Heart left ventricle (tissue), 16 donors: ENCODE measurements at regions of chr15 and their contacts with region 1.

Region 1: GRCh38 chr15:56886932-56887781 is 31.3 kb upstream of the TCF12 start:
- DNase-seq: peak; percentile 96 to 97 (median 97)
- ATAC-seq: peak; percentile 98 to 99 (median 98)
- H3K4me3 ChIP-seq: peak overlapping the region; percentile 47 to 86 (median 71)
- H3K27ac ChIP-seq: peak overlapping the region; percentile 95 to 99 (median 98)
- H3K4me1 ChIP-seq: peaks cover 0 to 32% (median 17%) of the 10 kb centered on the region in 12 donors
- H3K27me3 ChIP-seq: no peaks in the 10 kb centered on the region
- CTCF ChIP-seq: peak in 3 of 12 donors; percentile 12 to 33 (median 28)
- POLR2A ChIP-seq: peak in 1 of 2 donors; percentile 75

Region 2: GRCh38 chr15:56732921-56733797 is 154.0 kb before region 1 on chr15 and contains the start of gene ZNF280D:
- intact Hi-C with region 1: loop called in 3 of 10 experiments (anchors 2 to 10 kb)
- DNase-seq: peak; percentile 93 to 96 (median 94)
- ATAC-seq: peak; percentile 85 to 97 (median 96)
- H3K4me3 ChIP-seq: peak within 1 kb of the TSS; percentile 61 to 88 (median 76)
- H3K27ac ChIP-seq: peak within 1 kb of the TSS; percentile 96 to 99 (median 98)
- H3K4me1 ChIP-seq: peaks cover 0 to 48% (median 39%) of the 10 kb centered on the region in 12 donors
- H3K27me3 ChIP-seq: no peaks in the 10 kb centered on the region
- CTCF ChIP-seq: peak in 1 of 12 donors; percentile 7
- POLR2A ChIP-seq: peak in 1 of 2 donors; percentile 61
- total RNA-seq, gene ZNF280D: 14.6 to 32.8 (median 23.9) TPM

Region 3: DNA sequence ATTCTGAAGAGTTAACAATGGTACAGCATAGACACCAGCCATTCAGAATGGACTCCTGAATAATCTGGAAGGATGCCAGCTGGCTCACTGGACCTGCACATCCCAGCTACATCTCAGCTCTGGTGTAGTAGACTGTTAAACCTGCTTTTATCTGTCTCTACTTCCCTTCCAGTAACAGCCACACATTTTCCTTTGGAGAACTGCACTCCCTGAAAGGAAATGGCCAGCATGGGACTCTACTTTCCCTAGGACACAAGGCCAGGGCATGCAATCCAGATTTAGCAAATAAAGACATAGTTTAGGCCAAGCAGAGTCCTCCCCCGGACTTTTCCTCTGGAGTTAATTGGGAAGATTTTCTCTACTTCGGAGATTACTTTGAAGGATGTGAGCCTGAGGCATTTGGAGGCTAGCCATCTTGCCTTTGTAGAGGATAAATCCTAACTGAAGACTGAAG is 51.4 kb before region 1 on chr15:
- intact Hi-C with region 1: loop called in 1 of 10 experiments (anchors 5 kb)
- DNase-seq: peak in 4 of 5 donors; percentile 32 to 60 (median 42)
- ATAC-seq: peak; percentile 49 to 74 (median 60)
- H3K4me3 ChIP-seq: no peak overlapping the region
- H3K27ac ChIP-seq: peak overlapping the region in 1 of 12 donors; percentile 15
- H3K4me1 ChIP-seq: peaks cover 0 to 24% (median 10%) of the 10 kb centered on the region in 12 donors
- H3K27me3 ChIP-seq: no peaks in the 10 kb centered on the region
- CTCF ChIP-seq: no peak
- POLR2A ChIP-seq: no peak

Region 4: GRCh38 chr15:56950979-56951378 is 63.8 kb after region 1 on chr15:
- intact Hi-C with region 1: no loop called
- DNase-seq: no peak
- ATAC-seq: no peak
- H3K4me3 ChIP-seq: no peak overlapping the region
- H3K27ac ChIP-seq: no peak overlapping the region
- H3K4me1 ChIP-seq: peaks cover 0 to 29% (median 8%) of the 10 kb centered on the region in 12 donors
- H3K27me3 ChIP-seq: no peaks in the 10 kb centered on the region
- CTCF ChIP-seq: no peak
- POLR2A ChIP-seq: no peak

Region 5: DNA sequence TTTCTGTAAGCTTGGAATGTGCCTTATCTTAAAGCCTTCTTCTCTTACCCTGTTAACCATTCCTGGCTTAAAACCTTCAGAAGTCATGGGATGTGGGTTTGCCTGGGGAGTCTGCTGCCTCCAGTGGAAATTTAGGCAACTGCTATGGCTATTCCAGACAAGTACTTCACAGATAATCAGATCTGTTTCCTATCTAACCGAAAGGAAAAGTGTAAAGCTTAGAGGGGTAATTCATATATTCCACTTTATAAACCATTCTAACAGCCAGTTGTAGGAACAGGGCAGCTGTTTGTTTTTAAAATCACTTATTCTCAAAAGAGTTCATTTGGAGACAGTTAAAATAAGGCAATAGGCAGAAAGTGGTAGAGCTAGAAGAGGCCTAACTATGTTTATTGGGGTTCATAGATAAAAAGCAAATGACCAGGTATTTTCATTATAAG is 251.2 kb after region 1 on chr15:
- intact Hi-C with region 1: loop called in 2 of 10 experiments (anchors 5 to 10 kb)
- DNase-seq: peak in 1 of 5 donors; percentile 31
- ATAC-seq: peak; percentile 53 to 82 (median 78)
- H3K4me3 ChIP-seq: no peak overlapping the region
- H3K27ac ChIP-seq: no peak overlapping the region
- H3K4me1 ChIP-seq: peaks cover 0 to 56% (median 41%) of the 10 kb centered on the region in 12 donors
- H3K27me3 ChIP-seq: no peaks in the 10 kb centered on the region
- CTCF ChIP-seq: peak; percentile 60 to 86 (median 78)
- POLR2A ChIP-seq: no peak